OCI-LY7 (cell line): ENCODE measurements at regions of chr11 and their contacts with region 1.

Region 1: GRCh38 chr11:1608363-1608762 is at the start of gene KRTAP5-3:
- DNase-seq: no peak
- H3K4me3 ChIP-seq: no peak within 1 kb of the TSS
- H3K27ac ChIP-seq: no peak within 1 kb of the TSS
- H3K4me1 ChIP-seq: no peaks in the 10 kb centered on the region
- CTCF ChIP-seq: no peak
- total RNA-seq, gene KRTAP5-3: not detected in 2 replicates

Region 2: DNA sequence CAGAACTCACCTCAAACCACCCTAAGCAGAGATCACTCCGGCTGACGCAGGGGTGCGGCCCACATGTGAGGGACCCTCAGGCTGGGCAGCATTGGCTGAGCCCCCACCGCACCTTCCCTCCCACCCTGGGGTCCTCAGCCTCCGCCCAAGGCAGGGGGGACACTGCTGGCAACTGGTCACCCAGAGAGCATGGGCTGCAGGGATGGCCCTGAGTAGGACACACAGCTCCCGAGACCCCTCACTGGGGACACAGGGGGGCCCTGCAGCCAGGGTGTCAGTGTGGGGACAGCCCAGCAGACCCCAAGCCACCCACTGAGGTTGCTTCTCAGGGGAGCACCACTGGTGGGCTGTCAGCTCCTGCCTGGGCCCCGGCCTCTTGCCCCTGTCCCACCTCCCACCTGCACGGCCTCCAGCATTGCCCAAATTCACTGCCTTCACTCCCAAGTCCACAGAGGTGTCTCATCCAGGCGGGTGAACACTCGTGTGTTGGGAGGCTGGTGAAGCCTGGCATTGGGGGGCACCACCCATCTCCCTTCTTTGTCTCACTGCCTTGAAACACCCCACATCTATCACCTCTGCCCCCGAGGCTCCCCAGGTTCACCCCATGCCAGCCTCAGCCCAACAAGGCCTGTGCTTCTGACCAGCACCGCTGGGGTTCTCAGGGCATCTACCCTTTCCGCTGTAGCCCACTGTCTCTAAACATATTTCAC is 688.7 kb after region 1 on chr11:
- CTCF ChIA-PET with region 1: no interaction called
- POLR2A ChIA-PET with region 1: interaction called, 16 read pairs
- intact Hi-C with region 1: no loop called
- DNase-seq: no peak
- H3K4me3 ChIP-seq: no peak overlapping the region
- H3K27ac ChIP-seq: no peak overlapping the region
- H3K4me1 ChIP-seq: no peaks in the 10 kb centered on the region
- CTCF ChIP-seq: no peak